Heart right ventricle (tissue), 16 donors: ENCODE measurements at regions of chr20 and their contacts with region 1.

Region 1: DNA sequence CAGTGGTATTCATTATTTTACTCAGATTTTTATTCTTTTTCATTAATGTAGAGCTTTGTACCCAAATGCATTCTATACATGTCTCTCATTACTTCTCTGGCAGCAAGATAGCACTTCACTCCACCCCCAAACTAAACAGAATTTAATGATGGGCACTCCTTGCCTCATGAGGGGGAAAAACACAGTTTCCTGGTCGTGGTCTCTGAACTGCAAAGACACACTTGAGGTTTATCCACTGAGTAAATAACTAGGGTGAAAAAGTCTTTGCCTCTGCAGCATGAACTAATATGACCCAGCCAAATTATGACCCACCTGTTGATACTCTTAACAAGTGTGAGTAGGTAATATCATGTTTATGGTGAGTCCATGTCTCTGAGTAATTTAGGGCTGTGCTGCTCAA is 785.2 kb upstream of the FLRT3 start:
- DNase-seq: no peak
- ATAC-seq: no peak
- H3K4me3 ChIP-seq: no peak overlapping the region
- H3K27ac ChIP-seq: no peak overlapping the region
- H3K4me1 ChIP-seq: no peaks in the 10 kb centered on the region
- H3K27me3 ChIP-seq: no peaks in the 10 kb centered on the region
- CTCF ChIP-seq: no peak

Region 2: GRCh38 chr20:14415492-14415891 is 707.1 kb before region 1 on chr20:
- intact Hi-C with region 1: loop called in 1 of 10 experiments (anchors 10 kb)
- DNase-seq: no peak
- ATAC-seq: no peak
- H3K4me3 ChIP-seq: no peak overlapping the region
- H3K27ac ChIP-seq: no peak overlapping the region
- H3K4me1 ChIP-seq: no peaks in the 10 kb centered on the region
- H3K27me3 ChIP-seq: no peaks in the 10 kb centered on the region
- CTCF ChIP-seq: no peak

Region 3: DNA sequence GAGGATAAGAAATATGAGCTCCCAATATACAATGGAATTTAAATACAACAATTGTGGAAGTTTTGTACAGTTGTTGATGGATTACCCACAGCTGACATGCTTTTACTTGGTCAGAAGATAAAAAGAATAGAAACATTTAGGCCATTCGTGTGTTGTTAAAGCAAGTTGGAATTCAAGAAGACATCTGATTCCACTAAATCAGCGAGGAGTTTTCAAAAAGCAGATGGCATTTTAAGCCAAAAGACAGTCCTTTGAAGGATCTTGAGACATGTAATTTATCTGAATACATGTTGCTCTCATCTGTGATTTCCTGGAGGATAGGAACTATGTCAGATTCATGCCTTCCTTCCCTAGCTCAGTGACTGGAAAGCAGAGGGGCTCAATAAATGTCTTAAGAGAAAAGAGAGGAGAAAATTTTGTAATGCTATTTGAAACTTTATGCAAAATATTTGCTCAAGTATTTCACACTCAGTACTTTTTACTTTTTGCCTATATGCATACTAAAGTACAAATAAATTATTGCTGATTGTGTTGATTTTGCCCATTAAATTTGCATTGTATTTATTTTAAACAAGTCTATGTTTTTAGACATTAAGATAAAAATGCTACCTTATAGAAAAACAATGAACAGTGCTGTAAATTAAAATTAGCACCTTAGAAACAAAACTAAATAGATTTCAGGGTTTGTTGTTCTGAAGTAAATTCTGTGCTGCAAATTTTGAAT is 51.4 kb before region 1 on chr20:
- intact Hi-C with region 1: no loop called
- DNase-seq: no peak
- ATAC-seq: no peak
- H3K4me3 ChIP-seq: no peak overlapping the region
- H3K27ac ChIP-seq: no peak overlapping the region
- H3K4me1 ChIP-seq: no peaks in the 10 kb centered on the region
- H3K27me3 ChIP-seq: no peaks in the 10 kb centered on the region
- CTCF ChIP-seq: no peak

Region 4: DNA sequence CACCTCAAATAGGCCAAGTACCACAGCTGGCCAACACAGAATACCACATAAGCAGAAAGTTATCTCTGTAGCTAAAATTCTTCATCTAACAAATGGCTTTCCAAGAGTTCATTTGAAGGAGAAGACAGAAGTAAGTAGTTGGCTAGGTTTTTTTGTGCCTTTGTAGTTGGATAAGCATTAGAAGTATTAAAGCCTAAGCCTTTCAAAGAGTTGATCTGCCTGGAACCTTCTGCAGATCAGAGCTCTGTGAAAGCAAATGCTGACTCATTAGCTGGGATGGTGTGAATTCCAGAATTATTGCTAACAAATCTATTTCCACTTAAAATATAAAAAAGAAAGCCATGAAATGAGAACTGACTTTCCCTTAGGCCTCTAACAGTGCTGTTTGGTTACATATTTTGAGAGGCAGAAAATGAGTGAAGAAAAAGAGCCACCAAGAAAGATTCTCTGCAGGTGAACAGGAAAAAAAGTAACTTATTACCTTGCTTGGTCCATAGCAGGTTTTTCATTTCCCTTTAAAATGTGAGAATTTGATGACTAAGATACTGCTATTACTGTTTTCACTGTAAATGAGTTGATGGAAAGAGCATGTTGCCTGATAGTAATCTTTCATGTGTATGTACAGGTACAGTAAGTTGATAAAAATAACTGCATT is 22.0 kb before region 1 on chr20:
- intact Hi-C with region 1: no loop called
- DNase-seq: no peak
- ATAC-seq: no peak
- H3K4me3 ChIP-seq: no peak overlapping the region
- H3K27ac ChIP-seq: no peak overlapping the region
- H3K4me1 ChIP-seq: no peaks in the 10 kb centered on the region
- H3K27me3 ChIP-seq: no peaks in the 10 kb centered on the region
- CTCF ChIP-seq: no peak